ENCODE measurements at regions of chr9 and their contacts with region 1.

Region 1: GRCh38 chr9:93143830-93144530 is 9.9 kb upstream of the NINJ1 start:
- DNase-seq: no peak
- H3K4me3 ChIP-seq: no peak overlapping the region
- H3K27ac ChIP-seq: no peak overlapping the region
- H3K4me1 ChIP-seq: no peaks in the 10 kb centered on the region
- H3K27me3 ChIP-seq: no peaks in the 10 kb centered on the region
- CTCF ChIP-seq: no peak
- EP300 ChIP-seq: no peak
- POLR2A ChIP-seq: no peak

Region 2: GRCh38 chr9:91253488-91253887 is 1890.5 kb before region 1 on chr9:
- intact Hi-C with region 1: loop called in 1 of 4 experiments (anchors 10 kb)
- DNase-seq: no peak
- H3K4me3 ChIP-seq: no peak overlapping the region
- H3K27ac ChIP-seq: no peak overlapping the region
- H3K4me1 ChIP-seq: no peaks in the 10 kb centered on the region
- H3K27me3 ChIP-seq: no peaks in the 10 kb centered on the region
- CTCF ChIP-seq: no peak
- EP300 ChIP-seq: no peak
- POLR2A ChIP-seq: no peak

Region 3: GRCh38 chr9:93329632-93330315 is 185.8 kb after region 1 on chr9:
- intact Hi-C with region 1: no loop called
- DNase-seq: no peak
- H3K4me3 ChIP-seq: no peak overlapping the region
- H3K27ac ChIP-seq: no peak overlapping the region
- H3K4me1 ChIP-seq: no peaks in the 10 kb centered on the region
- H3K27me3 ChIP-seq: no peaks in the 10 kb centered on the region
- CTCF ChIP-seq: no peak
- EP300 ChIP-seq: no peak
- POLR2A ChIP-seq: no peak

Measured in ovary (tissue), 10 donors.